BJ (cell line): ENCODE measurements at regions of chr12 and their contacts with region 1.

Region 1: DNA sequence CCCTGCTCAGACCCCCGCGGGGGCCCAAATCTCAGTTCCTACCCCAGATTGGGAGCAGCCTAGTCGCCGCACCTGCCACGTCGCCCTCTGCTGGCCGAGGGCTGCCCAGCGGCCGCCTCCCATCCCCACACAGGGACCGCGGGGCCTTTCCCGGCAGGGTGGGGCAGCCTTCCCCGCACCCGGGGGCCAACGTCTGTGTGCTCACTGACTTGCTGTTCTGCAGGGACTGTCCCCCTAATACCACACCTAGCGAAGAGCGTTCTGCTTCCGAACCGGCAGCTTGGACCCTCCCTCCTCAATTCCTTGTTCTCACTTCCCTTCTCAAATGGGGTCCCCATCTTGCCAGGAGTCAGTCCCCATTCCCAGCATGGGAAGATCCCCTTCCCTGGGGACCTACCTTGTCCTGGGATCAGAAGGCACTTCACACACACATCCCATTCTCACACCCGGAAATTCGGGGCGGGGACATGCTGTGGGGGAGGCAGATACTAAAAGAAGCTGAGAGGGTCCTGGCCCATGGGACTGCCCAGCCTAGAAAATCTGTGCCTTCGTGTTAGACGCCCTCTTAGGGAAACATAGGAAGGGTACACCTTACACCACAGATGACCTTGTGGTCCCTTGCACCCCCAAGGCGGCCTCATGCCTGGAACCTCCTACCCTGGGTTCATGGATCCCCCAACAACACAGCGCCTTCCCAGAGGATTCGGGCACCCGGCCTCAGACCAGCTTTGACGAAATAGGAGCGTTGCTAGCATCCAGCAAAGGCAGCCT is 16.4 kb downstream of the ACVRL1 start:
- DNase-seq: no peak
- H3K4me3 ChIP-seq: 0 out of 2 replicates have a peak overlapping the region, but pooled peaks have one; percentile 6
- H3K27me3 ChIP-seq: no peaks in the 10 kb centered on the region
- CTCF ChIP-seq: peak; percentile 94

Region 2: GRCh38 chr12:51150777-51151176 is 772.9 kb before region 1 on chr12:
- CTCF ChIA-PET with region 1: no interaction called
- POLR2A ChIA-PET with region 1: no interaction called
- DNase-seq: no peak
- H3K4me3 ChIP-seq: no peak overlapping the region
- H3K27me3 ChIP-seq: no peaks in the 10 kb centered on the region
- CTCF ChIP-seq: no peak

Region 3: DNA sequence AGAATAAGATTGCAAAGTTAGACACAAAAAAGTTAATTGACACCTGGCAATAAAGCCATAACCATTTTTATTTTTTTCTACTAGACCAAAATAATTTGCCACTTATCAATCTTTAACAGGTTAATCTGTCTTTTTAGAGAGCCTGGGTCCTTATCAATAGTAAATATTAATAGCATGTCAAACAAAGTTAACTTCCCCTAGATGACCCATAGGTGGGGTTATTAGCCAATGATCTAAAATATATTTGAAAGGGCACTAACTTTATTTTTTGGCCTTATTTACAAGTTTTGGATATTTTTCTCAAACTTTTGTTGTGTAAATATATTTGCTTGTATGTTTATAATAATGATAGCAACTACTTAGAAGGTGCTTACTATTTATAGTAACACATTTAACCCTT is 31.8 kb before region 1 on chr12:
- CTCF ChIA-PET with region 1: interaction called, 119 read pairs
- POLR2A ChIA-PET with region 1: no interaction called
- DNase-seq: no peak
- H3K4me3 ChIP-seq: no peak overlapping the region
- H3K27me3 ChIP-seq: no peaks in the 10 kb centered on the region
- CTCF ChIP-seq: peak; percentile 36; the same call in 1 of the 2 replicates

Region 4: GRCh38 chr12:51934080-51934479 is 10.4 kb after region 1 on chr12:
- CTCF ChIA-PET with region 1: interaction called, 42 read pairs
- POLR2A ChIA-PET with region 1: interaction called, 3 read pairs
- DNase-seq: no peak
- H3K4me3 ChIP-seq: no peak overlapping the region
- H3K27me3 ChIP-seq: peaks cover 9% of the 10 kb centered on the region
- CTCF ChIP-seq: no peak

Region 5: GRCh38 chr12:51951199-51951842 is 27.6 kb after region 1 on chr12 and contains the start of gene ACVR1B:
- CTCF ChIA-PET with region 1: interaction called, 31 read pairs
- POLR2A ChIA-PET with region 1: no interaction called
- DNase-seq: no peak
- H3K4me3 ChIP-seq: peak within 1 kb of the TSS; percentile 86
- H3K27me3 ChIP-seq: peaks cover 12% of the 10 kb centered on the region
- CTCF ChIP-seq: no peak
- polyA plus RNA-seq, gene ACVR1B: 12.6 and 12.9 TPM in 2 replicates